CD8-positive, alpha-beta T cell (primary cell): ENCODE measurements at regions of chr4 and their contacts with region 1.

Region 1: DNA sequence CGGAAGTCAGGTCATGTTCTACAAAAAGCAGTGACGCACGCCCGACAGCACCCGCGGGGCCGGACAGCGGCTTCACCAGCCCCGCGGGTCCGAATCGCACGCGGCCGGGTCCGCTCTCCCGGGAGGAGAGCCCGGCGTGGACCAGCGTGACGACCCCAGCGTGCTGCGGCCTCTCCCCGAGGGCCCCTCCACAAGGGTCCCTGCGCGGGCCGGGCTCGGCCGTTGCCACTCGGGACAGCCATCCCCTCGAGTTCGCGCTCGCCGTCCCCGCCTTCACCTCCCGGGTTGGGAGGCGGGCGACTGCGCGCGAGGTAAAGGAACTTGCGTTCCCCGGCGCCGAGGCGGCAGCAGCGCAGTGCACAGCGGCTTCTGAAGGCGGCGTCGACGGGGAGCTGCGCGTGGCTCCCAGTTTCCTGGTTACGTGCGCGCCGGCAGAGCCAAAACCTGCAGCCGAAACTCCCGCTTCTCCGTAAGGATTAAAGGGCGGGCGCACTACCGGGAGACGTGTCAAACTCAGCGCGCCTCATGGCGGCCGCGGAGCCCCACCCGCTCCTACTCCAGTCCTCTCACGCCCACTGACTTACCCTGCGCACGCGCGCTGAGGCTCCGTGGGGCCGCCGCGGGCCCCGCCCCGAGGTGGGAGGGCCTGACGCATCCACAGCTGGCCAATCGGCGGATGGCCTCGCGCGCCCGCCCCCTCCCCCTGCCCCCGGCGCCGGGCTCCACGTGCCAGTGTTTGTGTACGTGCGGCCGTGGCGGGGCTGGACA is 416 bp upstream of the LRP2BP start:
- DNase-seq: peak; percentile 91 to 98 (median 95)
- ATAC-seq: peak; percentile 92
- H3K4me3 ChIP-seq: peak overlapping the region; percentile 73 to 95
- H3K4me3 Mint-ChIP-seq: peak overlapping the region; percentile 95
- H3K27ac ChIP-seq: peak overlapping the region; percentile 98 to 99
- H3K27ac Mint-ChIP-seq: peak overlapping the region; percentile 99
- H3K4me1 ChIP-seq: peaks cover 16% of the 10 kb centered on the region
- H3K4me1 Mint-ChIP-seq: peaks cover 20% of the 10 kb centered on the region
- H3K27me3 ChIP-seq: no peaks in the 10 kb centered on the region
- H3K27me3 Mint-ChIP-seq: no peaks in the 10 kb centered on the region
- CTCF ChIP-seq: no peak

Region 2: DNA sequence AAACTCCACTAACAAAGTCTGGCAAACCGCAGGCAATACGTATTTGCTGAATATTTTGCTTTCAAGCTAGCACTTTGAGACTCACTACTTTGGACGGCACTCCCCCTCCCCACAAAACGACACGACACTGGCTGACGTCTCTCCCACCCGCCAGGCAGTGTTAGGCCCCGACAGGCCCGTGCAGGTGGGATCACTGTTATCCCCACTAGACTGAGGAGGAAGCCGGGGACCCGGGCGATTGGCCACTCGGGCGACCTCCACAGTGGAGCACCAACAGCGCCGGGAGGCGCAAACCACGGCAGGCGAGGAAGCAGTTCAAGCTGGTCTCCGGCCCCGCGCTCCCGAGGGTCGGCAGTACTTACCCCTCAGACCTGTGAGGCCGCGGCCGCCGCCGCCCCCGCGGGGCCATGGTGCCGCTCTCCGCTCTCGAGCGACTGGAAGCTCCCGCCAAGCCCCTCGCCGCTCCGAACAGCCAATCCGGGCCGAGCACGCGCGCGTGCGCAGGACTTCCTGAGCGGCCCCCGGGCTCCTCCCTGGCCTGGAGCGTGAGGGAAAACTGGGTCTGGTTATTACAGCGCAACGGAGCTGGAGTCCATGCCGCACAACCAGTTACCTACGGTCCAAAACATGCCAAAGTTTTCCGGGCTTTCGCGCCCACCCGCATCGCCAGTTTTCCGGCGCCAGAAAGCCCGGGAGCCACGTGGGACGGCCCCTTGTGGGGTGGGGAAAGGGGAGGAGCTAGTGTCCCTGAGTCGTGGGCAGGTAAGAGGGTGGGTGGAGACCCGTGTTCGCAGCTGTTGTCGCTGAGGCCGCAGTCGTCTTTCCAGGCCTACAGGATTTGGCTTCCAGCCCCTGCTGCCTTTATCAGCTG is 662.3 kb before region 1 on chr4 and contains the start of gene CENPU:
- CTCF ChIA-PET with region 1: no interaction called
- POLR2A ChIA-PET with region 1: no interaction called
- intact Hi-C with region 1: loop called (anchors 5 kb)
- DNase-seq: peak; percentile 87 to 97 (median 94)
- ATAC-seq: peak; percentile 95
- H3K4me3 ChIP-seq: peak within 1 kb of the TSS; percentile 74 to 79
- H3K4me3 Mint-ChIP-seq: peak within 1 kb of the TSS; percentile 87
- H3K27ac ChIP-seq: peak within 1 kb of the TSS; percentile 2 to 43
- H3K27ac Mint-ChIP-seq: peak within 1 kb of the TSS; percentile 84
- H3K4me1 ChIP-seq: peaks cover 8% of the 10 kb centered on the region
- H3K4me1 Mint-ChIP-seq: peaks cover 18% of the 10 kb centered on the region
- H3K27me3 ChIP-seq: no peaks in the 10 kb centered on the region
- H3K27me3 Mint-ChIP-seq: no peaks in the 10 kb centered on the region
- CTCF ChIP-seq: no peak
- total RNA-seq, gene CENPU: 3.4 TPM

Region 3: GRCh38 chr4:185254434-185254833 is 141.7 kb before region 1 on chr4:
- CTCF ChIA-PET with region 1: no interaction called
- POLR2A ChIA-PET with region 1: interaction called, 3 read pairs
- intact Hi-C with region 1: loop called in 1 of 2 experiments (anchors 5 kb)
- DNase-seq: peak in 2 of 9 experiments; percentile 61 to 62
- ATAC-seq: peak; percentile 75
- H3K4me3 ChIP-seq: no peak overlapping the region
- H3K4me3 Mint-ChIP-seq: peak overlapping the region; percentile 42
- H3K27ac ChIP-seq: no peak overlapping the region
- H3K27ac Mint-ChIP-seq: peak overlapping the region; percentile 92
- H3K4me1 ChIP-seq: peaks cover 15% of the 10 kb centered on the region
- H3K4me1 Mint-ChIP-seq: peaks cover 63% of the 10 kb centered on the region
- H3K27me3 ChIP-seq: no peaks in the 10 kb centered on the region
- H3K27me3 Mint-ChIP-seq: no peaks in the 10 kb centered on the region
- CTCF ChIP-seq: no peak

Region 4: DNA sequence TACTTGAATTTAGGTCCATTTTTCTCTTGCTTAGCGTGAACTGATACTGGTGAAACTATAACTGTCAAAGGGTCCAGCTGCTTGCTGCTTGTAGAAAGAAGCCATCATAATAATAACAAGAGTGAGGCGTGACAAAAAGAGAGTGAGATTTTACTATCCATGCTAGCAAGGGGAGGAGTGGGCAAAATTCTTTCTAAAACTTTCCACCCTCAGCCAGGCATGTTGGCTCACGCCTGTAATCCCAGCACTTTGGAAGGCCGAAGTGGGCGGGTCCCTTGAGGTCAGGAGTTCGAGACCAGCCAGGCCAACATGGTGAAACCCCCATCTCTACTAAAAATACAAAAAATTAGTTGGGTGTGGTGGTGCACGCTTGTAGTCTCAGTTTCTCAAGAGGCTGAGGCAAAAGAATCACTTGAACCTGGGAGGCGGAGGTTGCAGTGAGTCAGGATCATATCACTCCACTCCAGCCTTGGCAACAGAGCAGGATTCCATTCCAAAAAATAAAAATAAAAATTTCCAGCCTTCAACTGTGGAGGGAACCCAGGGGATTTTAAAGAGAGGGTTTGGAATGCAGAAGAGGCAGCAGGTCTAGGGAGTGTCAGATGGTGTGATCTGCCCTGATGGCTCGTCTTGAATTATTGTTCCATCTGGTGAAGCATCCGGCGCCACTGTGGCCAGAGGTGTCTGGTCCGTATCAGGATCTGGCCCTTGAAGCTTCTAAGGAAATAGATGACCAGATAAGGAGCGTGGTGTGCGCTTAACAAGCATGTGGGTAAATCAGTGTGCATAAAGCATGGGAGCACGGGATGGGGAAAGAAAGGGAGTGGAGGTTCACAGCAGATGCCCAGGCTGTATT is 52.2 kb before region 1 on chr4:
- CTCF ChIA-PET with region 1: no interaction called
- POLR2A ChIA-PET with region 1: no interaction called
- intact Hi-C with region 1: no loop called
- DNase-seq: no peak
- ATAC-seq: no peak
- H3K4me3 ChIP-seq: no peak overlapping the region
- H3K4me3 Mint-ChIP-seq: no peak overlapping the region
- H3K27ac ChIP-seq: no peak overlapping the region
- H3K27ac Mint-ChIP-seq: peak overlapping the region; percentile 47
- H3K4me1 ChIP-seq: peaks cover 11% of the 10 kb centered on the region
- H3K4me1 Mint-ChIP-seq: peaks cover 30% of the 10 kb centered on the region
- H3K27me3 ChIP-seq: no peaks in the 10 kb centered on the region
- H3K27me3 Mint-ChIP-seq: no peaks in the 10 kb centered on the region
- CTCF ChIP-seq: no peak

Region 5: GRCh38 chr4:185471235-185472102 is 75.3 kb after region 1 on chr4 and contains the start of gene CCDC110:
- CTCF ChIA-PET with region 1: no interaction called
- POLR2A ChIA-PET with region 1: no interaction called
- intact Hi-C with region 1: loop called (anchors 1 to 2 kb)
- DNase-seq: peak; percentile 79 to 96 (median 88)
- ATAC-seq: peak; percentile 95
- H3K4me3 ChIP-seq: peak within 1 kb of the TSS; percentile 60 to 85
- H3K4me3 Mint-ChIP-seq: peak within 1 kb of the TSS; percentile 93
- H3K27ac ChIP-seq: peak within 1 kb of the TSS; percentile 27 to 34
- H3K27ac Mint-ChIP-seq: peak within 1 kb of the TSS; percentile 67
- H3K4me1 ChIP-seq: peaks cover 13% of the 10 kb centered on the region
- H3K4me1 Mint-ChIP-seq: peaks cover 16% of the 10 kb centered on the region
- H3K27me3 ChIP-seq: no peaks in the 10 kb centered on the region
- H3K27me3 Mint-ChIP-seq: peaks cover 2% of the 10 kb centered on the region
- CTCF ChIP-seq: peak; percentile 64
- total RNA-seq, gene CCDC110: 0.57 TPM in 1 of 2 experiments, not detected in the other

Region 6: GRCh38 chr4:185839194-185839712 is 443.1 kb after region 1 on chr4:
- CTCF ChIA-PET with region 1: no interaction called
- POLR2A ChIA-PET with region 1: no interaction called
- intact Hi-C with region 1: no loop called
- DNase-seq: no peak
- ATAC-seq: no peak
- H3K4me3 ChIP-seq: no peak overlapping the region
- H3K4me3 Mint-ChIP-seq: no peak overlapping the region
- H3K27ac ChIP-seq: no peak overlapping the region
- H3K27ac Mint-ChIP-seq: no peak overlapping the region
- H3K4me1 ChIP-seq: no peaks in the 10 kb centered on the region
- H3K4me1 Mint-ChIP-seq: no peaks in the 10 kb centered on the region
- H3K27me3 ChIP-seq: peaks cover 0 to 3% of the 10 kb centered on the region in 2 experiments
- H3K27me3 Mint-ChIP-seq: peaks cover 3% of the 10 kb centered on the region
- CTCF ChIP-seq: no peak

Region 7: GRCh38 chr4:185896823-185897488 is 500.8 kb after region 1 on chr4:
- CTCF ChIA-PET with region 1: no interaction called
- POLR2A ChIA-PET with region 1: no interaction called
- intact Hi-C with region 1: no loop called
- DNase-seq: no peak
- ATAC-seq: no peak
- H3K4me3 ChIP-seq: no peak overlapping the region
- H3K4me3 Mint-ChIP-seq: no peak overlapping the region
- H3K27ac ChIP-seq: no peak overlapping the region
- H3K27ac Mint-ChIP-seq: no peak overlapping the region
- H3K4me1 ChIP-seq: no peaks in the 10 kb centered on the region
- H3K4me1 Mint-ChIP-seq: no peaks in the 10 kb centered on the region
- H3K27me3 ChIP-seq: no peaks in the 10 kb centered on the region
- H3K27me3 Mint-ChIP-seq: peaks cover 5% of the 10 kb centered on the region
- CTCF ChIP-seq: no peak

Region 8: GRCh38 chr4:186392026-186392425 is 995.9 kb after region 1 on chr4:
- CTCF ChIA-PET with region 1: no interaction called
- POLR2A ChIA-PET with region 1: no interaction called
- intact Hi-C with region 1: no loop called
- DNase-seq: no peak
- ATAC-seq: no peak
- H3K4me3 ChIP-seq: no peak overlapping the region
- H3K4me3 Mint-ChIP-seq: no peak overlapping the region
- H3K27ac ChIP-seq: no peak overlapping the region
- H3K27ac Mint-ChIP-seq: no peak overlapping the region
- H3K4me1 ChIP-seq: no peaks in the 10 kb centered on the region
- H3K4me1 Mint-ChIP-seq: no peaks in the 10 kb centered on the region
- H3K27me3 ChIP-seq: no peaks in the 10 kb centered on the region
- H3K27me3 Mint-ChIP-seq: no peaks in the 10 kb centered on the region
- CTCF ChIP-seq: no peak